Mucosa of descending colon (tissue), 3 donors: ENCODE measurements at regions of chr15 and their contacts with region 1.

Region 1: DNA sequence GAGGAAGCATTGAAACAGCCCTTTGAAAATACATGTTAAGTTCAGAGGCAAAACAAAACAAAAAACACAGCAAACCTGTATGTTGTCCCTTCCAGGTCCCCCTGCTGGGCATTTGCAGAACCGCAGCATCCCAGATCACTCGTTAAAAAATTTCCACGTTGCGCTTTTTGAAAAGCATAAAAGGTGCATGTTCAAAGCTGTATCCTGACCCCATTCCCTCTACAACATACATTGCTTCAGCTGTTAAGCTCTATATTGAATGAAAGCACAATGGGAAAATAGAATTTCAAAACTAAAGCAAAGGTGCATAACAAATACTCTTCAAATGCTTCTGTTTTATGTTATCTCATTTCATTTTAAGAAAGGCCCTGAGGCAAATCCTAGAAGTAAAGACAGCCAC is 328.3 kb downstream of the THSD4 start:
- DNase-seq: peak in 2 of 3 donors; percentile 70 to 77
- ATAC-seq: peak; percentile 49
- H3K4me3 ChIP-seq: no peak overlapping the region
- H3K4me1 ChIP-seq: peaks cover 8% of the 10 kb centered on the region
- CTCF ChIP-seq: peak; percentile 88

Region 2: DNA sequence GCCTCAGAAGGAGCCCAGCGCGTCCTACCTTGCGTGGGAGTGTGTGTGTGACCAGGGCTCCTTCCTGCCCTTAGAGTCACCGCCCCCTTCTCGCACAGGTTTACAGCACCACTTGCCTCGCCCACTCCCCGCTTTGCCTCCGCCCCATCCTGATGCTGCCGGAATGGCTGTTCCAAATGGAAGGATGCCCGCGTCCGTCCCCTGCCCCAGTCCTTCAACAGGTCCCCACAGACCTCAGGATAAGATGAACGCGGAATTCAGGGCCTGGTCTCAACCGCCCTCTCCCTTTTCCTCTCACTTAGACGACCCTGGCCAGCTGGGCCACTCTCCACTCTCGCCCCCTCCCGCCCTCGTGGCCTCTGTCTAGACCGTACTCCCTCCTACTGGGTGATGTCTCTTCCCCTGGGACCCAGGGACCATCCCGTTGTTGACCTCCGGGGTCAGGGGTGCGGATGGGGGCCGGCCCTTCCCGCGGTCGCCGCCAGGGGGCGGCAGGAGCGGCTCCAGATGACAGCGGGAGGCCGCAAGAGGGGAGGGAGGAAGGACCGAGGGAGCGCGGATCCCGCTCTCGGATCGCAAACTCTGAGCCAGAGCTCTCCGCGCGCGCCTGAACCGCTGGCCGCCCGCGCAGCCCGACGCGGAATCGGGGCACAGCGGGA is 328.5 kb before region 1 on chr15 and contains the start of gene THSD4:
- intact Hi-C with region 1: loop called in 1 of 2 experiments (anchors 5 kb)
- DNase-seq: peak; percentile 75 to 85 (median 83)
- ATAC-seq: peak; percentile 80
- H3K4me3 ChIP-seq: peak within 1 kb of the TSS; percentile 34
- H3K4me1 ChIP-seq: peaks cover 25% of the 10 kb centered on the region
- CTCF ChIP-seq: peak; percentile 97
- total RNA-seq, gene THSD4: 18.3 to 46.2 (median 27.1) TPM

Region 3: DNA sequence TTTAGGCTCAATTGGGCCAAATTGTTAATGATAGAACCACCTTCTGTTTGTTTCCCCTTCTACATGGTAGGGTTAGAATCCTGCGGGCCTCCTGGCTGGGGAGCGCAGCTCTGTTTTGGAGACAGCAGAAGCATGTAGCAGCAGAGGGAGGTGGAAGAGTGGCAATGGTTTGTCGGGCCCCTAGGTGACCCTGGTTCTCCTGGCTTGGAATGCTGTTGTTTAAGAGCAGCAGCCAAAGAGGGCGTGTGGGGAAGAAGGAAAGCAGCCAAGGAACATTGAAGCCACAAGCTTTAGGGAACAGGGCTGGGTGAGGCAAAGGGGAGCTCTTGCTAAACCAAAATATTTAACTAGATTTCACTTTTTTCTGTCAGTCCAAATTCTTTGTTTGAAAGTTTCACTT is 153.1 kb after region 1 on chr15:
- intact Hi-C with region 1: no loop called
- DNase-seq: peak in 1 of 3 donors; percentile 25
- ATAC-seq: no peak
- H3K4me3 ChIP-seq: no peak overlapping the region
- H3K4me1 ChIP-seq: no peaks in the 10 kb centered on the region
- CTCF ChIP-seq: no peak